Right ventricle myocardium superior (tissue), 1 donor: ENCODE measurements at regions of chr20 and their contacts with region 1.

Region 1: DNA sequence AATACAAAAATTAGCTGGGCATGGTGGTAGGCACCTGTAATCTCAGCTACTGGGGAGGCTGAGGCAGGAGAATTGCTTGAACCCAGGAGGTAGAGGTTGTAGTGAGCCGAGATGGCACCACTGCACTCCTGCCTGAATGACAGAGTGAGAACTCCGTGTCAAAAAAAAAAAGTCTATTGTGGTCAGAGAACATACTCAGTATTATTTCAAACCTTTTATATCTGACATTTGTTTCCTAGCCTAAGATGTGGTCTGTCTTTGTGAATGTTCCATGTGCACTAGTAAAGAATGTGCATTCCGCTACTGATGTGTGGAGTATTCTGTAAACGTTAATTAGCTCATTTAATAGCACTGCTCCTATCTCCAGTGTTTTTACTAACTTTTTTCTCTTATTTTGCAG is 11.7 kb downstream of the RAB22A start:
- DNase-seq: no peak
- ATAC-seq: no peak

Region 2: GRCh38 chr20:58102260-58102659 is 218.9 kb before region 1 on chr20:
- intact Hi-C with region 1: no loop called
- DNase-seq: no peak
- ATAC-seq: no peak

Region 3: DNA sequence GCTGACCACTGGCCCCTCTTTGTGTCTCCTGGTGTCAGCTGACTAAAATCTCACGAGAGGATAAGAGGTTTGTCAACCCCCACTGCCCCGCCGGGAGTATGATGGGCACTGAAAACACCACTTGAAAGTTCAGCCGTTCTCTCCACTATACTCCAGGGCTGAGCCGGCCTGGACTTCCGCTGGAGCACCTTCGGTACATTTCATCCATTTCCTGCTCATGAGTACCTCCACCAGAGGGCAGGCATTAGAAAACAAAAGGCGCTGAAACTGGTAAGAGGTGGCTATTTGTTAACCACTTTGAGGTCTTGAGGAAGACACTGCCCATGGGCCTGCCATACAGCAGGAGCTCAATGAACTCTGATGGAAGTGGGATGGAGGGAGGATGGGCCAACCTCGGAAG is 74.9 kb before region 1 on chr20:
- intact Hi-C with region 1: no loop called
- DNase-seq: no peak
- ATAC-seq: no peak

Region 4: DNA sequence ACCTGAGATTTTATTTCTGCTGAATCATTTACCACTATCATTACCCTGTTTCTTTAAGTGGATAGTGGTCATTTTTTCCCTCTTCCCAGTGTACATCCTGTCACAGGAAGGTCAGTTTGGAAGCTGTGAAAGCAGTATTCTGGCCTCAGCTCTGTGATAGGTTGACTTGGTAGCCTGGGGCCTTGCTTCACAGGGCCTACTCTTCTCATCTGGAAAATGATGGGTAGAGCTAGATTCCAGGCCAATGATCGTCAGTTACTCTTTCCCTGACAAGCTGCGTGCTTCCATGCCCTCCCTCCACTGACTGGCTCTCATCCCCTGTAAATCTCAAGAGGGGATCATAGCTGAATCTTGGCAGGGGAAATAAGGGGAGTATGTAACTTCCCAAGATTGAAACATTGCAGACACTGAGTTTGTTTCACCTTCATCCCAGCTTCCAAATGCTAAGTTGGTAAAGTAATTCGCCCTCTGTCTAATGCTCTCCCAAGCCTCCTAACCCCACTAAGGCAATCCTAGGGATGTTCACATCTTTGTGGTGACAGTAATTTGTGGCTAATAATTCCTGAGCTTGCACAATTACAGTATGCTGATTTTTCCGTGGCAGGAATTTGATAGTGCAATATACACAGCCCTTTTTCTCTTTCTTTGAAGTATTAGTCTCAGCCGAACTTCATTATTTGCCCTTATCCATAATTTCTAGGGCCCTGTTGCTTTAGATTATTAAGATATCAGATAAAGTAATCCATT is 119.0 kb after region 1 on chr20:
- intact Hi-C with region 1: loop called (anchors 5 kb)
- DNase-seq: no peak
- ATAC-seq: peak; percentile 36